GM18951 (cell line): ENCODE measurements at regions of chr1 and their contacts with region 1.

Region 1: GRCh38 chr1:160951443-160952128 is 3.0 kb downstream of the ITLN2 start:
- POLR2A ChIP-seq: no peak

Region 2: DNA sequence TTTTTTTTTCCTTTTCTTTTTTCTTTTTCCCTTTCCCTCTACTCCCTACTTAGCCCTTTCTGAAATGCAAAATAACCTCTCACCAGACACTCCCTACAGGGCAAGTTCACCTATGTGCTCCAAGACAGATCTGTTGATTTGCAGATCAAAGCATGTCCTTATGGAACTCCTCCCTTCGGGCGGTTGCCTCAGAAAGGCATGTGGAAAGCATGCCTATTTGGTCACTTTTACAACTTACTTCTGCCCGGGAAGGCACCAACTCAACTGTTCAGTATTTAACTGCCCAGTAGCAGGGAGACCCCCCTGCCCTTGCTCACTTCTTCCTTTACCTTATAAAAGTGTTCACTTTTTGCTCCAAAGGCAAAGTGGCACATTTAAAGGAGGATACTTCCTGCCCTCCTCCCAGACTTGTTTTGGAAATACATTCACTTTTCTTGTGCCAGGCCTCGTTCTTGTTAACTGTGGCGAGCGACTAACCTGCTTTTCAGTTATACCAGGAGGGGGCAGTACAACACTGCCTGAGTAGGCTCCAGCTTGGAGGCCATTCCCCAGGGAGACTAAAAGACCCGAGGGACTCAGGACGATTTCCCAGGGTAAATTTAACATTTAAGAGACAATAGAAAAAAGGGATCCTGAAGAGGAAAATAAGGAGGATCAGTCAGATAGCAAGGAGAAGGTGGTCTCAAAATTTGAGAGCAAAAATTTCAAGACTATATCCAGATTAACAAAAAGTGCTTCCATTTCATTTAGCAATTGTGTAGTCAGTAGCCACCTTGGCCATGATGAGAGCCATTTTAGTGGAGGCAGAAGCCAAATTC is 224.9 kb before region 1 on chr1:
- in situ Hi-C with region 1: loop called (anchors 10 kb)
- POLR2A ChIP-seq: no peak

Region 3: DNA sequence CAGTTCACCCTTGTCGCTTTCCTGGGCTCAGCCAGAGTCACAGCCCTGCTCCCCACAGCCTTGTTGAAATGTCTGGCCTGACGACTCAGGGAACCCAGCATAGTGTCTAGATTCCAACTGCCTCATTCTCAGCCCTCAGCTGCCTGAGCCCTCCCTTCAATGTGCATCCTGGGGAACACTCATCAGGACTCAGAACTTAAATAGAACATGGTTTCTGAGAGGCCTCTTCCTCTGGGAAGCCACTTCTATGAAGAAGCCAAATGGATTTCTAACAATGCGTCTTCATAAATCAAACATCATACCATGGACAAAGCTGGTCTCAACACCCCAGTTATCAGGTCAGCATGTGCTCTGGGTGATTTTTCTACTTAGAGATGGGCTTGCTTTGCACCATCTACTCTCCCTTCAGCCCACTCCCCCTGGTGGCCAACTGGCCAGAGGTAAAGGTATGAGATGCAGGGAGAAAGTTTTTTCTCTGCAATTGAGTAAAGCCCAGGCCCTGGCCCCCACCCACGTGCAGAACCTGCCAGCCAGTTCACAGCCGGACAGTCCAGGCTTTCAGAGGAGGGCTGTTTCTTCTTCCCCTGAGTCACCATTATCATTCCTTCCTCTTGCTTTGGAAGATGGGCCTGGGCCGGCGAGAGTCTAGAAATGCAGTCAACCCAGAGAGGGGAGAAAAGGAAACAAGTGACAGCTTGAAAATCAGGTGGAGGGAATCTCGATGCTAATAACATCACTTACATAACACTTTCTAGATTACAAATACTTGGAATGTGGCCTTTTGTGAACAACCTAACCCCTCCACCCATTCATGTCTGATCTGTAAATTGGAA is 121.0 kb before region 1 on chr1:
- in situ Hi-C with region 1: loop called (anchors 5 kb)
- POLR2A ChIP-seq: no peak

Region 4: DNA sequence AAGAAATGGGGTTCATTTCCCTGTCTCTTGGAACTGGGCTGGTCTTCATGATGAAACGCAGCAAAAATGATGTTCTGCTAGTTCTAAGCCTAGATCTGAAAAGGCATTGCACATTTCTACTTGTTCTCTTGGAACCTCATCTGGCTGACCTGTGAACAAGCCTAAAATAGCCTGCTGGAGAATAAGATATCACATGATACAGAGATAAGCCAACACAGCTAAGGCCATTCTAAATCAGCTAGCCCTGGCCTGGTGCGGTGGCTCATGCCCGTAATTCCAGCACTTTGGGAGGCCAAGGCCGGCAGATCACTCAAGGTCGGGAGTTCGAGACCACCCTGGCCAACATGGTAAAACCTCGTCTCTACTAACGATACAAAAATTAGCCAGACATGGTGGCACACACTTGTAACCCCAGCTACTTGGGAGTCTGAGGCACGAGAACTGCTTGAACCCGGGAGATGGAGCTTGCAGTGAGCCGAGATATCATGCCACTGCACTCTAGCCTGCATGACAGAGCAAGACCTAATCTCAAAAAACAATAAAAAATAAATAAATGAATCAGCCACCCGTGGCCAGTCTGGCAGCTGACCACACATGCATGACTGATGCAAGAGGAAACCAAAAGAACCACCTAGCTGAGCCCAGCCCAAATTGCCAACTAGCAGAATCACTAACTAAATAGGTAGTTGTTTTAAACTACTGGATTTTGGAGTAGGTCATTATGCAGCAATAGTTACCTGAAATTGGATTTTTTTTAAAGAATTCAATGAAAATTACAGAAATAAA is 106.9 kb before region 1 on chr1:
- in situ Hi-C with region 1: no loop called
- POLR2A ChIP-seq: no peak

Region 5: DNA sequence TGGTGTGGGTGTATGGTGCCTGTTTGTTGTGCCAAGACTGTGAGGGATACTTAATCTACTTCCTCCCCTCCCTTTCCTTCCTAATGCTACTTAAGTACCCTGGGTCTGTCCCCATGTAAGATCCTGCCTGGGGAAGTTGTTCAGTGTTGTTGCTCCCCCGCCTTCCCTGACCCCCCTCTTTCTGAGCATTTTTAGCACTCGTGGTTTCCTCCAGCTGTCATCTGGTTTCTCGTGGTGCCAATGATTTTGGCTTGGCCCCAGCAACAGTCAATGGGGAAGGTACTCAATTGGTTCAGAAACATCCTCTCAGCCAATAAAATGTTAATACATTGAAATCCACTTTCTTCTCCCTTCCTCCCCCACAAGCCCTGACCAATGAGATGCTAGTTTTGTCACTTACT is 233.7 kb after region 1 on chr1:
- in situ Hi-C with region 1: no loop called
- POLR2A ChIP-seq: peak; percentile 38